ENCODE measurements at regions of chr2 and their contacts with region 1.

Region 1: DNA sequence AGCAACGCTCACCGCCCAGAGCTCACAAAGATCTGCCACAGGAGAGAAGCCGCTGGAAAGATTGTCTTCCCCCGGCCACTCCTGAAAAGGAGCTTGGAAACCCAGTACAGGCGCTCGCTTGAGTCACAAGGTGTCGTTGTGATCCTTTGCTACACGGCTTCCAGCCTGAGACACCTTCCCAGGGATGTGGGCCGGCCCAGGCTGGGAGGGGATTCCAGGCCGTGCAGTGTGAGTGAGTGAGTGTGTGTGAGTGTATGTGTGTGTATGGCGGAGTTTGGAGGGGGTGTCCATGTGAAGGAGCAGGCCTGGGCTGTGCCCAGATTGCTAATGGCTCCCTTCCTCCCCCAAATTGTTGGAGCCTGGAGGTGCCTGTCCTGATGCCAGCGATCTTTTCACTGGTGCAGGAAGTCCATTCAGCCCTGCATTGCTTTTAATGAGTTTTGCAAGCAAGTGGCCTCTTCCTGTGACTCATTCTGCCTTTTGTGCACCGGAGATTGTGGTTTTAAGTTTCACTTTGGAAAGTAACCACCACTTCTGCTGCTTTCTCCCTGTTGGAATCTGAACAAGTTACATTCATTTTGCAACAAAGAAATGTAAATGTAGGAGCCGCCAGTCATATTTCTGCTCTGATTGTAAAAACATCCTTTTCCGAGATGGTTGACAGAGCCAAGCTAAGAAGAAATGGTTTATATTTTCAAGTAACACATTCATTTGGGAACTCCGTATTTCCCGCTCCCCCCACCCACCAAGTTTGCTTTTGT is 83.7 kb downstream of the LPIN1 start:
- DNase-seq: peak; percentile 67
- ATAC-seq: peak; percentile 77
- H3K4me3 Mint-ChIP-seq: peak overlapping the region; percentile 20
- H3K27ac Mint-ChIP-seq: peak overlapping the region; percentile 58
- H3K4me1 Mint-ChIP-seq: peaks cover 40% of the 10 kb centered on the region
- H3K27me3 Mint-ChIP-seq: peaks cover 26% of the 10 kb centered on the region

Region 2: GRCh38 chr2:11753886-11754699 is 76.0 kb before region 1 on chr2:
- CTCF ChIA-PET with region 1: interaction called, 4 read pairs
- POLR2A ChIA-PET with region 1: no interaction called
- intact Hi-C with region 1: loop called in 1 of 2 experiments (anchors 1 kb)
- DNase-seq: peak; percentile 84
- ATAC-seq: peak; percentile 75
- H3K4me3 Mint-ChIP-seq: peak overlapping the region; percentile 75
- H3K27ac Mint-ChIP-seq: peak overlapping the region; percentile 98
- H3K4me1 Mint-ChIP-seq: peaks cover 91% of the 10 kb centered on the region
- H3K27me3 Mint-ChIP-seq: no peaks in the 10 kb centered on the region

Region 3: GRCh38 chr2:12005886-12006681 is 176.0 kb after region 1 on chr2:
- CTCF ChIA-PET with region 1: interaction called, 3 read pairs
- POLR2A ChIA-PET with region 1: no interaction called
- intact Hi-C with region 1: loop called (anchors 1 to 2 kb)
- DNase-seq: peak; percentile 85
- ATAC-seq: peak; percentile 94
- H3K4me3 Mint-ChIP-seq: no peak overlapping the region
- H3K27ac Mint-ChIP-seq: no peak overlapping the region
- H3K4me1 Mint-ChIP-seq: peaks cover 16% of the 10 kb centered on the region
- H3K27me3 Mint-ChIP-seq: peaks cover 59% of the 10 kb centered on the region

Region 4: DNA sequence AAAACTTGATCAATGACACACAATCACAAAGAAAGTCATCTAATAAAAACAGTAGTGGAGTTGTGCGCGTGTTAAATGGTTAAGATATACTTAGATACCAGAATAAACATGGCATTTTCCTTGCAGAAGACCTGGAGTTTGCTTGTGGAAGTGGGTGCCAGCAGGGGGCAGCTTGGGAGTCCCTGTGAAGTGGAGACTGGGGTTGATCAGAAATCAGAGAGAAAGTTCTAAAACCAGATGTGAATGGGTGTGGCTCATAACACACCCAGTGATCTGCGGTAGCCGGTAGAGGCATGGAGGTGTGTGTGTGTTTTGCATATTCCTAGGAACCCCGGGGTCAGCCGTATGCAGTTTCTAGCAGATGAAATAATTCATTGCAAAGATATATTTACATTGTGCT is 586.5 kb after region 1 on chr2:
- CTCF ChIA-PET with region 1: no interaction called
- POLR2A ChIA-PET with region 1: no interaction called
- intact Hi-C with region 1: loop called in 1 of 2 experiments (anchors 5 kb)
- DNase-seq: peak; percentile 69
- ATAC-seq: peak; percentile 43
- H3K4me3 Mint-ChIP-seq: no peak overlapping the region
- H3K27ac Mint-ChIP-seq: no peak overlapping the region
- H3K4me1 Mint-ChIP-seq: peaks cover 36% of the 10 kb centered on the region
- H3K27me3 Mint-ChIP-seq: no peaks in the 10 kb centered on the region

Region 5: DNA sequence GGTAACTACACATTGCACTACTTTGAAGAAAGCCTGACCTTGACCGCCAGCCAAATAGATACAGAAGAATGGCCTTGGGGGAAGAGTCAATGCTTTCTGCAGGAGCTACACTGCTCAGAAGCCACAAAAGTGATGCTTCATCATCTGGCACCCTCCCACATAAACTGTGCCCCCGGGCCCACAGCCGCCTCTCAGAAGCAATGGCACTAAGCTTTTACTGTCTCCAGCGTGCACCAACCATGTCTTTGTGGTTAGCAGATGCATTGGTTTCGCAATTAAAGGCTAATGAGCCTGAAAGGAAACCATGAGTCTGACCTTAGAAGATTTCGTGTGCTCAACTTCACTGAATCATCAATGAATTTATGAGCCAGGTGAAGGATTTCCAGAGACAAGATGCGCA is 677.2 kb after region 1 on chr2:
- CTCF ChIA-PET with region 1: no interaction called
- POLR2A ChIA-PET with region 1: no interaction called
- intact Hi-C with region 1: loop called (anchors 1 kb)
- DNase-seq: peak; percentile 88
- ATAC-seq: peak; percentile 82
- H3K4me3 Mint-ChIP-seq: no peak overlapping the region
- H3K27ac Mint-ChIP-seq: peak overlapping the region; percentile 5
- H3K4me1 Mint-ChIP-seq: peaks cover 80% of the 10 kb centered on the region
- H3K27me3 Mint-ChIP-seq: no peaks in the 10 kb centered on the region

Region 6: DNA sequence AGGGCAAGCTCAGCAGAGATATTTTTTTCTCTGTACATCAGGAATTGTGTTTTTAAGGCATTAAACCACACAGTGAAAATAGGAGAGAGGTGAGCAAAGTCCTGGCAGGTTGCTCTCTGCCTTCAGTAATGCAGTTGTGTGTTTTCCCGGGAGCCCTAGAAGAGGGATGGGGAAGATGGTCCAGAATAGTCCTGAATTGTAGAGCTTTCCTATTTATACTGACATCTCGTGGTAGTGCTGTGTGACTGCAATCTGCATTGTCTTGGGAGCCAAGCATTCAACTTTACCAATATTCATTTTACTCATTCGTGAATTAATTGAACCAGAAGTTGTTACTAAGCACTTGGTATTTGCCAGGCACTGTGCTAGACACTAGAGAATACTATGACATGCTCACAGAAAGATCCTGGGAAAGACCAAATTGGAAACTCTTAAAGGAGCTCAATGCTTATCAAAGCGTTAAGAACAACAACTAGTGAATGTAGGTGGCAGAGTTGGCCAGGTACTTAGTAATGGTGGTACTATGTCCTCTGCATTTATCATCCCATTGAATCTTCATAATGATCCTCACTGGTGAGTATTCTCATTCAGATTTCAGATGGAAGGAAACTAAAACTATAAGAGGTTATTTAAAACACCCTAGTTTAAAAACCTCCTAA is 1101.2 kb after region 1 on chr2:
- CTCF ChIA-PET with region 1: no interaction called
- POLR2A ChIA-PET with region 1: no interaction called
- intact Hi-C with region 1: loop called (anchors 1 kb)
- DNase-seq: no peak
- ATAC-seq: no peak
- H3K4me3 Mint-ChIP-seq: no peak overlapping the region
- H3K27ac Mint-ChIP-seq: no peak overlapping the region
- H3K4me1 Mint-ChIP-seq: peaks cover 15% of the 10 kb centered on the region
- H3K27me3 Mint-ChIP-seq: peaks cover 11% of the 10 kb centered on the region

Measured in activated CD4-positive, alpha-beta T cell treated with anti-CD3 and anti-CD28 coated beads for 36 hours (primary cell).